ENCODE measurements at regions of chr14 and their contacts with region 1.

Region 1: GRCh38 chr14:55270832-55271565 is at the start of gene FBXO34:
- DNase-seq: peak; percentile 99 to 100
- ATAC-seq: peak; percentile 88 to 94 (median 91)
- H3K4me3 ChIP-seq: peak within 1 kb of the TSS; percentile 93
- H3K27ac ChIP-seq: peak within 1 kb of the TSS; percentile 96
- H3K4me1 ChIP-seq: peaks cover 14% of the 10 kb centered on the region
- H3K27me3 ChIP-seq: no peaks in the 10 kb centered on the region
- CTCF ChIP-seq: peak; percentile 99
- total RNA-seq, gene FBXO34: 22.6 to 57.4 (median 31.0) TPM

Region 2: GRCh38 chr14:55240526-55241178 is 30.3 kb before region 1 on chr14:
- intact Hi-C with region 1: no loop called
- DNase-seq: no peak
- ATAC-seq: peak in 2 of 4 donors; percentile 43 to 51
- H3K4me3 ChIP-seq: no peak overlapping the region
- H3K27ac ChIP-seq: no peak overlapping the region
- H3K4me1 ChIP-seq: no peaks in the 10 kb centered on the region
- H3K27me3 ChIP-seq: no peaks in the 10 kb centered on the region
- CTCF ChIP-seq: no peak

Region 3: DNA sequence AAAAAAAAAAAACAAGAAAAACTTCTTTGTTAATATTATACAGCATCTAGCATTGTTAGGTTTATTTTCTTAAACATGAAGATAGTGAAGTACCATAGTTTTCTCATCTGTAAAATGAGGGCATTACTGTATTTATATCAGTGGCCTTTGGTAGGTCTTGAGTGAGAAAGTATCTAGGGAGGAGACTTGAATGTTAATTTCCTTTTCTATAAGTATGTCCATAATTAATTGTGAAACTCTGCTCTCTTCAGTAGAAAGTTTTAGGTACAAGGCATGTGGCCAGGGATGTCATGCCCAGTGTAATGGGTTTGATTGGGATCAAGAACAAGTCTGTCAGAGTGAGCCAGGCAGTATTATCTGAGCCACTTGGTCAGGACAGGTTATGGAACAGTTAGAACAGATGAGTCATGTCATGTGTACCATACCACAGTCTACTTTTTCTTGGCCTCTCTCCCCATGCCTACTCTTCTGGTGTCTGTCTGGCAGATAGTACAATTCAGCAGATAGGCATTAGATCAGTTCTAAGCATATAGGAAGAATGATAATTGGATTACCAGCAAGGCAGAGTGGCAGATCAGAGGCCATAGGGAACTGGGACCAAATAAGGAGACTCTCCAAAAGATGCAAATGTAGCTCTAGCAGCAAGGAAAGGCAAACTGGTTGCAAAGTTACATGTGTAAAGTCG is 30.6 kb after region 1 on chr14:
- intact Hi-C with region 1: loop called in 1 of 2 experiments (anchors 2 kb)
- DNase-seq: no peak
- ATAC-seq: peak; percentile 89 to 93 (median 90)
- H3K4me3 ChIP-seq: peak overlapping the region; percentile 26
- H3K27ac ChIP-seq: peak overlapping the region; percentile 88
- H3K4me1 ChIP-seq: peaks cover 69% of the 10 kb centered on the region
- H3K27me3 ChIP-seq: no peaks in the 10 kb centered on the region
- CTCF ChIP-seq: no peak

Region 4: GRCh38 chr14:55354500-55354899 is 83.5 kb after region 1 on chr14:
- intact Hi-C with region 1: loop called (anchors 2 to 5 kb)
- DNase-seq: peak in 1 of 2 donors; percentile 19
- ATAC-seq: peak; percentile 78 to 86 (median 81)
- H3K4me3 ChIP-seq: no peak overlapping the region
- H3K27ac ChIP-seq: peak overlapping the region; percentile 53
- H3K4me1 ChIP-seq: peaks cover 6% of the 10 kb centered on the region
- H3K27me3 ChIP-seq: no peaks in the 10 kb centered on the region
- CTCF ChIP-seq: peak; percentile 62

Region 5: GRCh38 chr14:55430024-55430690 is 159.2 kb after region 1 on chr14:
- intact Hi-C with region 1: loop called (anchors 5 kb)
- DNase-seq: no peak
- ATAC-seq: peak; percentile 84 to 98 (median 91)
- H3K4me3 ChIP-seq: no peak overlapping the region
- H3K27ac ChIP-seq: peak overlapping the region; percentile 38
- H3K4me1 ChIP-seq: no peaks in the 10 kb centered on the region
- H3K27me3 ChIP-seq: no peaks in the 10 kb centered on the region
- CTCF ChIP-seq: peak; percentile 55

Region 6: DNA sequence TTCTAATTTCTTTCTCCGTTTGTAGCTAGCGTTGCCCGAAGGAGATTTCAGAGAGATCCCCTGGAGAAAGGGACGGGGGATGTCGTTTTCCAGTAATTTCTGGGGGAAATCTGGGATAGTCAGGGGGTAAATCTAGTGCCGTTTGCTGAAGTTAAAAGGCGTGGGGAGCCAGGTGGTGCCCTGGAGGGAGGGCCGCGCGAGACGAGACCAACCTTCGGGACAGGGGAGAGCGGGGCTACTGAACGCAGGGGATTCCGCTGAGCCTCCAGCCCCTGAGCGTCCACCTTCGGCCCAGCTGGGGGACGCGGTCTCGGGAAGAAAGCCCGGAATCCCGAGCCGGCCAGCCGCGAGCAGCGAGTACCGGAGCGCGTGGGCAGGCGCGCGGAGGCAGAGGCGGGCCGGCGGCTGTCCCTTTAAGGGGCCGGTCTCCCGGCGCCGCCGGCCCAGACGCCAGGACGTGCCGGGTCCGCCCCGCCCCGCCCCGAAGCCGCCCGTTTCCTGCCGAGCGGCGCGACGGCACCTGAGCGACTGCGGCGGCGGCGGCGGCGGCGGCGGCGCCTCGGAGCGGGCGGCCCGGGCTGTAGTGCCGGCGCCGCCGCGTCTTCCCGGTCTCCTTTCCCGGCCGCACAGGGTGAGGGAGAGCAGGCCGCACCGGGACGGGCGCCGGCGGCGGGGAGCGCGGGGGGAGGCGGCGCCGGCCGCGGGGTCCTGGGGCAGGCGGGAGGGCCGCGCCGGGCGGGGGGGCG is 308.9 kb after region 1 on chr14 and contains the start of gene KTN1:
- intact Hi-C with region 1: loop called in 1 of 2 experiments (anchors 10 kb)
- DNase-seq: peak; percentile 89 to 92
- ATAC-seq: peak; percentile 86 to 92 (median 86)
- H3K4me3 ChIP-seq: peak within 1 kb of the TSS; percentile 88
- H3K27ac ChIP-seq: peak within 1 kb of the TSS; percentile 99
- H3K4me1 ChIP-seq: peaks cover 38% of the 10 kb centered on the region
- H3K27me3 ChIP-seq: no peaks in the 10 kb centered on the region
- CTCF ChIP-seq: no peak
- total RNA-seq, gene KTN1: 238 to 607 (median 348) TPM

Region 7: GRCh38 chr14:55638665-55639064 is 367.7 kb after region 1 on chr14:
- intact Hi-C with region 1: no loop called
- DNase-seq: no peak
- ATAC-seq: no peak
- H3K4me3 ChIP-seq: no peak overlapping the region
- H3K27ac ChIP-seq: no peak overlapping the region
- H3K4me1 ChIP-seq: no peaks in the 10 kb centered on the region
- H3K27me3 ChIP-seq: no peaks in the 10 kb centered on the region
- CTCF ChIP-seq: no peak